ENCODE measurements at regions of chr14 and their contacts with region 1.

Region 1: DNA sequence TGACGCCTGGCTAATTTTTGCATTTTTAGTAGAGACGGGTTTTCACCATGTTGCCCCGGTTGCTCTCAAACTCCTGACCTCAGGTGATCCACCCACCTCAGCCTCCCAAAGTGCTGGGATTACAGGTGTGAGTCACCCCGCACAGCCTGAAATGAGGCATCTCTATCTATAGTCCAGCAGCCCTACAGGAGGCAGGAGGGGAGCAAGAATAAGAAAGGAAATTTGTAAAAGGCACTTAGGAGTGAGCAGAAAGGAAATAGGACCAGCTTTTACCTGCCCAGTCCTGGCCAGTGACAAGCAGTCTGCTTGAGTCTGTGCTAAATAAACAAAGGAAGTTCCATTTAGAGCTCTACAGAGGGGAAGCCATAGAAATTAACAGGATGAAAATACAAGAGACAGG is 15.0 kb upstream of the PSMA6 start:
- DNase-seq: no peak
- CTCF ChIP-seq: no peak

Region 2: DNA sequence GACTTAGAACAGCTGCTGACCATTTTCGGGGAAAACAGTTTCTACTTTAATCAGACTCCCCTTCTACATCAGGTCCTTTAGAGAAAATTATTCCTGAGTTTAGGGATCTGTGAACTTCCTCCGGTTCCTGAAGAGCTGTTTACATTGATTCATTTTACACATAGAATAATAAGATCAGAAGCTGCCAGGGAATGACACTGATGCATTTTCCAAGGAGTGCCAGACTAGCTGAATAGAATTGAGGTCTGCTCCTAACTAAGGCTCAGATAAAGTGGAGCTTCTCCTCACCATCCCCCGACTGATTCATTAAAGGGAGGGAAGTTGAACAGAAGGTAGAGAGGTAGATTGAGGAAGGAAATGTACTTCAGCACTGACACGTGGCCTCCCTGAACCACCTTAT is 26.9 kb before region 1 on chr14:
- CTCF ChIA-PET with region 1: no interaction called
- POLR2A ChIA-PET with region 1: no interaction called
- DNase-seq: no peak
- CTCF ChIP-seq: no peak

Region 3: GRCh38 chr14:35261774-35262173 is 15.4 kb before region 1 on chr14:
- CTCF ChIA-PET with region 1: interaction called, 12 read pairs
- POLR2A ChIA-PET with region 1: no interaction called
- DNase-seq: no peak
- CTCF ChIP-seq: no peak

Region 4: DNA sequence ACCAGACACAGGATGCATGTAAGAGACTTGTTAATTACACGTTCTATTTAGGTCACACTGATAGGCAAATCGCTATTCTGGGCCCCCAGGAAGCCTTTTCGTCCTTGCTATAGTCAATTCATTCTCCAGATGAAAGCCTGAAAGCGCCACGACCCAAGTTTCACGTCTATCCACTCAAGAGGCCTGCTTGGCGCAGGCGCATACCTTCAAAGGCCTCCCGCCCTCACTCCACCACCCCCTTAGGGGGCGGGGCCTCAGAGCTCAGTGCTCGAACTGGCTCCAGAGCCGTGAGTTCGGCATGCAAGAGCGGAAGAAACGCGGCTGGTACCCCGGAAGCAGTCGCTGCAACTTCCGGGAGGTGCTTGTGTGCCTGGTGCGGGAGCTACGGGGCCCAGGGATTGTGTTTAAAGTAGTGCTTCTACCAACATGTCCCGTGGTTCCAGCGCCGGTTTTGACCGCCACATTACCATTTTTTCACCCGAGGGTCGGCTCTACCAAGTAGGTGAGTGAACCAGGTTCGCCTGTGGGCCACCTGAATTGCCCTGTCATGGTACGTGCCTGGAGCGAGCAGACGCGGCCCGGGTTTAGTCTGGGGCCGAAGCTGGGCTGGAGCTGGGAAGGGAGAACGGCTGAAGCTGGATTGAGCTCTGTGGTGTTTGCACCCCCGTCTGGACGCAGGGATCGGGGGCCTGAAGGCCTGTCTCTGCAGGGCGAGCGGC is 15.0 kb after region 1 on chr14 and contains the start of gene PSMA6:
- CTCF ChIA-PET with region 1: interaction called, 10 read pairs
- POLR2A ChIA-PET with region 1: no interaction called
- DNase-seq: peak; percentile 95
- CTCF ChIP-seq: no peak